ENCODE measurements at regions of chr9 and their contacts with region 1.

Region 1: GRCh38 chr9:20884985-20885593 is 146.4 kb downstream of the HACD4 start:
- DNase-seq: peak in 5 of 6 donors; percentile 5 to 65 (median 31)
- ATAC-seq: peak in 3 of 4 donors; percentile 56 to 64 (median 62)
- H3K4me3 ChIP-seq: no peak overlapping the region
- H3K27ac ChIP-seq: no peak overlapping the region
- H3K4me1 ChIP-seq: no peaks in the 10 kb centered on the region
- H3K27me3 ChIP-seq: no peaks in the 10 kb centered on the region
- CTCF ChIP-seq: peak in 3 of 4 donors; percentile 27 to 62 (median 60)

Region 2: GRCh38 chr9:20636888-20637440 is 248.1 kb before region 1 on chr9:
- intact Hi-C with region 1: loop called in 1 of 3 experiments (anchors 10 kb)
- DNase-seq: no peak
- ATAC-seq: no peak
- H3K4me3 ChIP-seq: no peak overlapping the region
- H3K27ac ChIP-seq: no peak overlapping the region
- H3K4me1 ChIP-seq: no peaks in the 10 kb centered on the region
- H3K27me3 ChIP-seq: no peaks in the 10 kb centered on the region
- CTCF ChIP-seq: no peak

Region 3: GRCh38 chr9:21016701-21017491 is 131.8 kb after region 1 on chr9:
- intact Hi-C with region 1: no loop called
- DNase-seq: no peak
- ATAC-seq: no peak
- H3K4me3 ChIP-seq: no peak overlapping the region
- H3K27ac ChIP-seq: no peak overlapping the region
- H3K4me1 ChIP-seq: no peaks in the 10 kb centered on the region
- H3K27me3 ChIP-seq: no peaks in the 10 kb centered on the region
- CTCF ChIP-seq: no peak

Measured in pancreas (tissue), 10 donors.